ENCODE measurements at regions of chr1 and their contacts with region 1.

Region 1: DNA sequence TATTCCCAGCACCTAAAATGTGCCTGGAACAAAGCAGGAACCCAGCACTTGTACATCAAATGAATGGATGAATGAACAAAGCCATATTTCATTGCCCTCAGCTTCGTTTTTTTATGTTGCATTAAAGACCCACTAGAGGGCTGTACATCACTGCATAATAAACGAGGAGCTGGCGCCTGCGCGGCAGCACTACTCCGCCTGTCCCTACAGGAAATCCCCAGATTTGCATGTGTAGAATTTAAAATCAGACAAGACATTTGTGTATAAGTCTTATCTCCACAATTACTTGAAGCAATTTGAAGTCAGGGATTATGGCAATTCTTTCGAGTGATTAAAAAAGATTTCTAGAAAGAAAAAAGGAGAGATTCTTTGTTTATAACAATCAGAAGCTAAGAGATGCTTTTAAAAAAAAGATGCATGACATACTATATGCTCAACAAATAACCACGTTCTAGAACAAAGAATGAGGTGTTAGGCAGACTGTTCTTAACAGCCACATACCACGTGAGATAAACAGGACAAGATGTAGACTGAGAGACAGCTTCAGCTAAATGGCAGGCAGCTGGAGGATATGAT is 5.4 kb upstream of the NEK2 start:
- DNase-seq: peak; percentile 63 to 81
- H3K4me3 ChIP-seq: no peak overlapping the region
- H3K27ac ChIP-seq: no peak overlapping the region
- H3K4me1 ChIP-seq: no peaks in the 10 kb centered on the region; the same call in 1 of the 2 replicates
- H3K27me3 ChIP-seq: no peaks in the 10 kb centered on the region
- CTCF ChIP-seq: peak; percentile 79

Region 2: DNA sequence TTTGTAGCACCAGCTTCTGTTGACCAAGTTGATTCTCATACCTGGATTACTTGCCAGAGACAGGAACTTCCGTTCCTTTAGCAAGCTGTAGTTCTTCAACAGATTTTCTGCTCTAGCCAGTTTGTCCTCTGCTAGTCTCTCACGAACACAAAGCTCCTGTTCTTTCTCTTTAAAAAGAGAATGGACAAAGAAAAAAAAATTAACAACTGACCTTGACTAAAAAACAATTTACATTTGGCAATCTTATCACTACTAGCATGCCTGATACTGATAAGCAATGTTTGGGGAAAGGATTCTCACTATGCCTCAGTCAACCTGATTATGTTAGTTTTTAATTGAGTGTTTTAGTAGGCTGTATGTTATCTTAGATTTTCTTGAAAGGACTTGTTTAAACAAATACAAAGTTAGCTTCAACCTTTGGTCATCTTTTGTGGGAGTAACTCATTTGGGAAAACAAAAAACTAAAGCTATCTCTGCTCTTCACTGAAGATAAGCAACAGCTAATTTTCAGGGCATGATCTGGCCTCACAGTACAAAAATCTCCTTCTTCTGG is 13.7 kb before region 1 on chr1:
- CTCF ChIA-PET with region 1: no interaction called
- POLR2A ChIA-PET with region 1: no interaction called
- intact Hi-C with region 1: no loop called
- DNase-seq: no peak
- H3K4me3 ChIP-seq: no peak overlapping the region
- H3K27ac ChIP-seq: no peak overlapping the region
- H3K4me1 ChIP-seq: 0 out of 2 replicates have a peak, but pooled peaks cover 5% of the 10 kb centered on the region
- H3K27me3 ChIP-seq: no peaks in the 10 kb centered on the region
- CTCF ChIP-seq: no peak

Region 3: DNA sequence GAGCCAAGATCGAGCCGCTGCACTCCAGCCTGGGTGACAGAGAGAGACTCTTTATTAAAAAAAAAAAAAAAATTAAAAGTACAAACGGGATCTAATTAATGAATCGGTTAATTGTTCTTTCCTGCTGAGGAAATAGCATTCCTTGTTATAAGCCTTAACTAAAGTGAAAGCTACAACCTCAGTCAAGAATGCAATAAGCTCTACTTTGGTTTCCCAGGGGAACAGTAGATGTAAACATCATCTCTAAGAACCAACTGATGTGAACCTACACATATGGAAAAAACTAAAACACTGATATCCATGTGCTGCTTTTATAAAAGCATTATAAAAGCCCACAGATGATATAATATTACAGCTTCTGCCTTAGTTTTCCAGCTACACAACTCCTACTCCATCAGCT is 107.8 kb after region 1 on chr1:
- CTCF ChIA-PET with region 1: no interaction called
- POLR2A ChIA-PET with region 1: no interaction called
- intact Hi-C with region 1: no loop called
- DNase-seq: no peak
- H3K4me3 ChIP-seq: no peak overlapping the region
- H3K27ac ChIP-seq: no peak overlapping the region
- H3K4me1 ChIP-seq: no peaks in the 10 kb centered on the region
- H3K27me3 ChIP-seq: no peaks in the 10 kb centered on the region
- CTCF ChIP-seq: no peak

Region 4: GRCh38 chr1:211951856-211952255 is 271.0 kb after region 1 on chr1:
- CTCF ChIA-PET with region 1: interaction called, 13 read pairs
- POLR2A ChIA-PET with region 1: no interaction called
- intact Hi-C with region 1: no loop called
- DNase-seq: peak; percentile 42 to 81
- H3K4me3 ChIP-seq: no peak overlapping the region
- H3K27ac ChIP-seq: peak overlapping the region; percentile 86
- H3K4me1 ChIP-seq: peaks cover 16% of the 10 kb centered on the region
- H3K27me3 ChIP-seq: no peaks in the 10 kb centered on the region
- CTCF ChIP-seq: no peak

Region 5: GRCh38 chr1:212062832-212063438 is 382.1 kb after region 1 on chr1:
- CTCF ChIA-PET with region 1: interaction called, 4 read pairs
- POLR2A ChIA-PET with region 1: no interaction called
- intact Hi-C with region 1: loop called (anchors 1 kb)
- DNase-seq: no peak
- H3K4me3 ChIP-seq: no peak overlapping the region
- H3K27ac ChIP-seq: no peak overlapping the region
- H3K4me1 ChIP-seq: no peaks in the 10 kb centered on the region
- H3K27me3 ChIP-seq: no peaks in the 10 kb centered on the region
- CTCF ChIP-seq: peak; percentile 84

Region 6: GRCh38 chr1:212368073-212368484 is 687.2 kb after region 1 on chr1:
- CTCF ChIA-PET with region 1: no interaction called
- POLR2A ChIA-PET with region 1: no interaction called
- intact Hi-C with region 1: loop called (anchors 2 kb)
- DNase-seq: peak; percentile 41 to 67
- H3K4me3 ChIP-seq: no peak overlapping the region
- H3K27ac ChIP-seq: no peak overlapping the region
- H3K4me1 ChIP-seq: no peaks in the 10 kb centered on the region
- H3K27me3 ChIP-seq: no peaks in the 10 kb centered on the region
- CTCF ChIP-seq: peak; percentile 87

Region 7: DNA sequence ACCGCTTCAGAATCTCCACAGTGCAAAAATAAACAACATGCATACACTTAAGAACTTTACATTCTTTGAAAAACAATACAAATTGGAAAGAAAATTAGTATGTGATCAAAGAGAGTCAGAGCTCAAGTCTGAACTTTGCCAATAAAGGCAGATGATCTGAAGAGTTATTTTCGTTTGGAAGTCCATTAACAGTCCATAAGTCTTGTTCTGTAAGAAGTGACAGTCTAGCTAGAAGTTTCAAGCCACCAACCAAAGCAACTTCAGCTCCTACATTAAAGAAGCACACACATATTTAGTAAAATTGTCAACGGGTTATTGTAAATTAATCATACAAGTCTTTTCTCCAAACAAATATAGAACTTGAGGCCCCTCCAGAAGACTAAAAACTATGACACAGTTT is 1314.1 kb after region 1 on chr1:
- CTCF ChIA-PET with region 1: interaction called, 3 read pairs
- POLR2A ChIA-PET with region 1: no interaction called
- intact Hi-C with region 1: loop called (anchors 5 kb)
- DNase-seq: no peak
- H3K4me3 ChIP-seq: no peak overlapping the region
- H3K27ac ChIP-seq: no peak overlapping the region
- H3K4me1 ChIP-seq: no peaks in the 10 kb centered on the region
- H3K27me3 ChIP-seq: no peaks in the 10 kb centered on the region
- CTCF ChIP-seq: no peak

Measured in PC-9 (cell line).